Activated T-helper 2 cell treated with anti-CD3 and anti-CD28 coated beads, Interferon-gamma antibody, Interleukin-2, Interleukin-4, amounts not matched to agents 10 μg/mL and 5 μg/mL and 100 μg/mL, durations not matched to agents 14 hours and 24 hours and 36 hours (primary cell): ENCODE measurements at regions of chr10 and their contacts with region 1.

Region 1: DNA sequence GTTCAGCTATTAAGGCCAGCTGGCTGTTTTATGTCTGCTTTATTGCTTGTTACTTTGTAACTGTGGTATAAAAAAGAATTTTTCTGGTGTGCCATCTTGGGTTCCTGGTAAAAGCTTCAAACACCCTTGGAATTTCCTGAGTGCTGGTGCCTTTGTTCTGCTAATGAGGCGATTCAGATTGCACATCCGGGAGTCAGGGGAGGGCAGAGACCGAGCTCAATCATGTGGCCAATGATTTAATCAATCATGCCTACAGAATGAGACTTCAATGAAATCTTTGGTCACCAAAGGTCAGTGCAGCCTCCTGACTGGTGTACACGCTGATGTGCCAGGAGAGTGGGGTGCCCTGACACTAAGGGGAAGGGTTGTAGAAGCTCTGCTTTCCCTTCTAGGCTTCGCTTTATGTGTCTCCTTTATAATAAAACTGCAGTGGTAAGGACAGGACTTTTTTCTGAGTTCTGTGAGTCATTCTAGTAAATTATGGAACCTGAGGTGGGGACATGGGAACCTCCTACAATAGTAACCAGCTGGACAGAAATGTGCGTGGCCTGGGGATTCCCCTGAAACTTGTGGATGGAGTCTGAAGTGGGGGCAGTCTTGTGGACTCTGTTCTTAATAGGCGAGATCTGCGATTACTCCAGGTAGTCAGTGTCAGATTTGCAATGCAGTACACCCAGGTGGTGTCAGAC is 69.4 kb upstream of the OGDHL start:
- DNase-seq: no peak
- H3K4me3 Mint-ChIP-seq: no peak overlapping the region
- H3K27ac Mint-ChIP-seq: no peak overlapping the region
- H3K4me1 Mint-ChIP-seq: no peaks in the 10 kb centered on the region
- H3K27me3 Mint-ChIP-seq: no peaks in the 10 kb centered on the region

Region 2: GRCh38 chr10:48802611-48803071 is 1028.9 kb before region 1 on chr10:
- intact Hi-C with region 1: no loop called
- DNase-seq: no peak
- H3K4me3 Mint-ChIP-seq: no peak overlapping the region
- H3K27ac Mint-ChIP-seq: no peak overlapping the region
- H3K4me1 Mint-ChIP-seq: peaks cover 49% of the 10 kb centered on the region
- H3K27me3 Mint-ChIP-seq: no peaks in the 10 kb centered on the region

Region 3: DNA sequence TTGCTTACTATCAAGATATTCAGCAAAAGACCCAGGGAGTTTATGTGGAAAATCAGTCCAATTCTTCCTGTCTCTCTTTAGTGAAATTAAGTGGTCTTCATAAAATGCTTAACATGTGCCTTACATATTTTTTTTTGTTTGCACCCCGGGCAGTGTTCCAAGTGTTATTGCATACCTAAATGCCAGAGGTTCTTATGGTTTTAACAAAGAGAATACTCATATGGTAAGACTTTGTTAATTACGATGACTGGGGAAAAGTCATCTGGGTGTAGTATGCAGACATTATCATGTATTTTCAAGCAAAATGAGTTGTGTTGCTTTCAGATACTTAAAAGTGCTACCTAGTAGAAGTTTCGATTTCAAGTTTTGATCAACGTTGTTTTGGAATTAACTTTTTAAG is 1325.4 kb after region 1 on chr10:
- intact Hi-C with region 1: loop called (anchors 10 kb)
- DNase-seq: no peak
- H3K4me3 Mint-ChIP-seq: no peak overlapping the region
- H3K27ac Mint-ChIP-seq: no peak overlapping the region
- H3K4me1 Mint-ChIP-seq: no peaks in the 10 kb centered on the region
- H3K27me3 Mint-ChIP-seq: no peaks in the 10 kb centered on the region